Posterior vena cava (tissue), 2 donors: ENCODE measurements at regions of chr10 and their contacts with region 1.

Region 1: GRCh38 chr10:70466951-70467350 is 11.6 kb upstream of the PALD1 start:
- DNase-seq: no peak

Region 2: DNA sequence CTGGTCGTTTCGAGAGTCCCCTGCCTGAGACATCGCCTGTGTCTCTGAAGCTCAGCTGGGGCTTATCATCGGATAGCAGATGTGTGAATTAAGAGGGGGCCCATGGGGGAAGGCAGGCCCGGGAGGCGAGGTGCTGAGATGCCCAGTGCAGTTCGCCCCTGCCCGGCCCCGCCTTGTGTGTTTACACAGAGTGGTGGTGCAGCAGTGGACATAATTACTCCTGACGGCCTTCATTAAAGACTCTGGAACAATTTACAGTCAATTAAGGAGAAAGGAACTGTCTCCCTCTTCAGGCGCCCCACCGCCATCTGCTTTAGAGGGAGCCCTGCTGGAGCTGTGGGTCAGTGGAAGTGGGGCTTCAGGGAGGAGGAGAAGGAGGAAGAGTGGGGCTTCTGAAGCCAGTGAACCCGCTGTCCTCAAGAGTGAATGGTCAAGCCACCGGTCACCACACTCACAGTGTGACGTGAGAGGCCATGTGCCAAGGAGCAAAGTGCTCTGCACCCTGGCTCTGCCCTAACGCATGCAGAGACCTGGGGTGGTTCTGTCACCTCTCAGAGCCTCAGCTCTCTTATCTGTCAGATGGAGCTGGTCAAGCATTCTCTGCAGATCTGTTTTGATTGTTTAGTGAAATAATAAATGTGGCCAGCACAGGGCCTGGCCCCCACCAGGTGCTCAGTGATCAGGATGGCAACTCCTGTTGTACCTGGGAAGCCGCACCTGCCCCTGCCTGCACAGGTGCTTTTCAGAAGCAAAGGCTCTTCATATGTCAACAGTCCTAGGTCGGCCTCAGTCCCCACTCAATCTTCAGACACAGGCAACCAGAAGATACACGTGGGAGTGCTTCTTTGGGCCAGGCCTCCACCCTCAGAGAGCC is 995.3 kb after region 1 on chr10:
- intact Hi-C with region 1: loop called in 1 of 2 experiments (anchors 5 kb)
- DNase-seq: no peak